Pancreas (tissue), 10 donors: ENCODE measurements at regions of chr11 and their contacts with region 1.

Region 1: GRCh38 chr11:20127671-20128527 is 32.4 kb downstream of the DBX1 start:
- DNase-seq: peak; percentile 51 to 90 (median 79)
- ATAC-seq: peak; percentile 83 to 87 (median 86)
- H3K4me3 ChIP-seq: no peak overlapping the region
- H3K27ac ChIP-seq: no peak overlapping the region
- H3K4me1 ChIP-seq: no peaks in the 10 kb centered on the region
- H3K27me3 ChIP-seq: no peaks in the 10 kb centered on the region
- CTCF ChIP-seq: peak; percentile 61 to 86 (median 66)

Region 2: DNA sequence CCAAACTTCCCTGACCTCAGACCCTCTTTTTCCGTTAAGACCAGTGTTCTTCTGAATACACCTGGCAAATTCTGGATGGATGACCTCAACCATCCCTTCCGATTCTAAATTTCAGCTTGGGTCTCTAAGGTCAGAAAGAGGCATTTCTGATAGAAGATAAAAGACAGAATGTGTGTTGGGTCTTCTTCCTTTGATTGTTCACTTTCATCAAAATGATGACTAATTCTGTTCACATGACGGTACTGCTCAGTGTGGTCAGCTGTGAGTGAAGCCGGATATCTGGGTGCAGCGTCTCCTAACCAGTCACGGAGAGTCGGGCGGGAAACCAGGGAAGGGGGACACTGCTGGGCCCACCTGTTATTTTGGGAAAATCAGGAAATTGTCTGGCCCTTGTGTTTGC is 566.9 kb before region 1 on chr11:
- intact Hi-C with region 1: loop called in 1 of 3 experiments (anchors 10 kb)
- DNase-seq: no peak
- ATAC-seq: no peak
- H3K4me3 ChIP-seq: no peak overlapping the region
- H3K27ac ChIP-seq: no peak overlapping the region
- H3K4me1 ChIP-seq: no peaks in the 10 kb centered on the region
- H3K27me3 ChIP-seq: no peaks in the 10 kb centered on the region
- CTCF ChIP-seq: no peak

Region 3: GRCh38 chr11:19970944-19971343 is 157.0 kb before region 1 on chr11:
- intact Hi-C with region 1: no loop called
- DNase-seq: no peak
- ATAC-seq: no peak
- H3K4me3 ChIP-seq: no peak overlapping the region
- H3K27ac ChIP-seq: no peak overlapping the region
- H3K4me1 ChIP-seq: no peaks in the 10 kb centered on the region
- H3K27me3 ChIP-seq: no peaks in the 10 kb centered on the region
- CTCF ChIP-seq: no peak

Region 4: GRCh38 chr11:20355221-20356219 is 227.6 kb after region 1 on chr11:
- intact Hi-C with region 1: loop called in 1 of 3 experiments (anchors 10 kb)
- DNase-seq: peak in 1 of 6 donors; percentile 43
- ATAC-seq: peak; percentile 66 to 92 (median 88)
- H3K4me3 ChIP-seq: no peak overlapping the region
- H3K27ac ChIP-seq: no peak overlapping the region
- H3K4me1 ChIP-seq: no peaks in the 10 kb centered on the region
- H3K27me3 ChIP-seq: no peaks in the 10 kb centered on the region
- CTCF ChIP-seq: peak; percentile 41 to 59 (median 46)